ENCODE measurements at regions of chr6 and their contacts with region 1.

Region 1: DNA sequence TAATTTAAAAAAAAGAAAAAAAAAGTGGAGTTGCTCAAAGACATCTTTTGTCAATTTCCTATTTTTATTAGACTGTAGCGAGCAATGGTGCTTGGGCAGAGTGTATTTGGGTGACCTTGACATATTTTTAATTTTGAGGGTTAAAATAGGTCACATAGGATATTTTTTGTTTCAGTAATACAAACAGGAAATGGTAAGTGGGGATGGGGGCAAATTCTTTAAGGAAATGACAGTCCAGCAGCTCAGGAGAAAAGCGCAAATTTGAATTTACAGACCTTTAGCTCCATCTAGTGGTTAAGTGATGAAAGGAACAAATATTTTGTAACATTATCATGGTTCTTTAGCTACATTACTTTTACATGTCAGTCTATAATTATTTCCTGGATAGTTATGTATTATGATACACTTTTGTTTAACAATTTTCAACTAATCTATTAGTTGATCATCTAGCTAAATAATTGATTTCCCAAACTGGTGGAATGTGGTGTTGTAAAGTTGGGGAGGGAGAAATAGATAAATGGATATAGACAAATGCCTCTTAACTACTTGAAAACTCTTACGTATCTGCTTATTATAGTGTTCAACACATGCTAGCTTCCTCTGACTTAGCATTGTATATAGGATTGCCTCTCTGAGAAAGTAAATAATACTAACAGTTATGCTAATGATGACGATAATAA is 10.0 kb downstream of the CITED2 start:
- DNase-seq: no peak
- H3K4me3 Mint-ChIP-seq: no peak overlapping the region
- H3K27ac Mint-ChIP-seq: peak overlapping the region; percentile 10
- H3K4me1 Mint-ChIP-seq: peaks cover 34% of the 10 kb centered on the region
- H3K27me3 Mint-ChIP-seq: no peaks in the 10 kb centered on the region

Region 2: GRCh38 chr6:138817822-138818308 is 546.6 kb before region 1 on chr6:
- CTCF ChIA-PET with region 1: interaction called, 19 read pairs
- DNase-seq: no peak
- H3K4me3 Mint-ChIP-seq: no peak overlapping the region
- H3K27ac Mint-ChIP-seq: no peak overlapping the region
- H3K4me1 Mint-ChIP-seq: peaks cover 25% of the 10 kb centered on the region
- H3K27me3 Mint-ChIP-seq: no peaks in the 10 kb centered on the region

Region 3: DNA sequence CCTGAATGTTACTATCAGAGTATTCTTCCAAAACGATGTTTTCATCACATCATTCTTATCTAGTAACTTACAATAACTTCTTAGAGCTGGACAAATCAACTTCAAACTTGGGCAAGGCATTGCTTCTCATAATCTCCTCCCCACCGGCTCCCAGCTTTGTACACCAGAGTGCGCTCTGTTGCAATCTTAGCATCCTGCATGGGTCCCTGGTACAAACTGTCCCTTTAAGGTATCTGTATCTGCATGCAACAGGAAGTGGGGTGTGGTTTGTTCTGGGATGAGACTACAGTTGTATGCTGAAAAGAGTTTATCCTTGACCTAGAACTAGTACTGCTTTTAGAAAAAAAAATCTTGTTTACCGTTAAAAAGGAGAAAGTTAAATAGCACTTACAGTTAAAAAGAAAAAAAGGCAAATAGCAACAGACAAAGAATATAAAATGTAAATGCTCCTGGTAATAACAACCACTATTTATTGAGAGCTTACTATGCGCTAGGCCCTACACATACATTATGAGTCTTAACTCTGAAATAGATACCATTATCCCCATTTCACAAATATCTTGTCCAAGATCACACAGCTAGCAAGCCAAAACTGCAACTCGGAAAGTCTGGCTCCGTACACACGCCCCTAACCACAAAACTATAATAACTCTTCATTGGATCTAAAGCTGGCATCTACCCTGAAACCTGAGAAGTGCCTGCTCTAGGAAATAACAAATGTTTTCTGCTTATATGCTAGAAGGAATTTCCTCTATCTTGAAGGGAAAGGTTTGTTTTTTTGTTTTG is 239.4 kb before region 1 on chr6:
- CTCF ChIA-PET with region 1: interaction called, 38 read pairs
- DNase-seq: peak; percentile 89
- H3K4me3 Mint-ChIP-seq: peak overlapping the region; percentile 61
- H3K27ac Mint-ChIP-seq: peak overlapping the region; percentile 97
- H3K4me1 Mint-ChIP-seq: peaks cover 49% of the 10 kb centered on the region
- H3K27me3 Mint-ChIP-seq: no peaks in the 10 kb centered on the region

Region 4: GRCh38 chr6:139134817-139135581 is 229.4 kb before region 1 on chr6 and contains the start of gene HECA:
- CTCF ChIA-PET with region 1: interaction called, 14 read pairs
- DNase-seq: peak; percentile 99
- H3K4me3 Mint-ChIP-seq: peak within 1 kb of the TSS; percentile 82
- H3K27ac Mint-ChIP-seq: peak within 1 kb of the TSS; percentile 99
- H3K4me1 Mint-ChIP-seq: peaks cover 69% of the 10 kb centered on the region
- H3K27me3 Mint-ChIP-seq: no peaks in the 10 kb centered on the region

Region 5: DNA sequence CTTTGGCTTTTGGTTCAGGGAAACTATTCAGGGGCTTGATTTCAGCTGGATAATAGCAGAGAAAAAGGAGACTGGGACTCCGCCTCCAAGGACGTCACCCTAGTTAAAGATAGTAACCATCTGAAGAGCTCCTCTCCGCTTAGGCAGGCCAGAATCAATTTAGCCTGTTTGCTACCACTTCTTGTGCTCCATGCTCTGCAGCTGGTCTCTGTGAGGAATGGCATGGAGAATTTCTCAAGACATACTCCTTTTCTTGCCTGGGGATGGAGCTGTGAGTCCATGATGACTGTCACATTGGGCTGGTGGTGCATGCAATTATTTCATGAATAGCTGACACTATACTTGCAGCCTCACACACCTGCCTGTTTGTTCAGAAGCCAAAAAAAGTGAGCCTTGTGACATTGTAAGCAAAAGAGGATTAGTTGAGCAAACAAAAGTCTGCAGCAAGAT is 134.0 kb before region 1 on chr6:
- CTCF ChIA-PET with region 1: interaction called, 28 read pairs
- DNase-seq: no peak
- H3K4me3 Mint-ChIP-seq: no peak overlapping the region
- H3K27ac Mint-ChIP-seq: no peak overlapping the region
- H3K4me1 Mint-ChIP-seq: no peaks in the 10 kb centered on the region
- H3K27me3 Mint-ChIP-seq: no peaks in the 10 kb centered on the region

Region 6: GRCh38 chr6:139291813-139292619 is 72.4 kb before region 1 on chr6 and contains the start of gene TXLNB:
- CTCF ChIA-PET with region 1: interaction called, 37 read pairs
- DNase-seq: peak; percentile 92
- H3K4me3 Mint-ChIP-seq: peak within 1 kb of the TSS; percentile 70
- H3K27ac Mint-ChIP-seq: peak within 1 kb of the TSS; percentile 97
- H3K4me1 Mint-ChIP-seq: peaks cover 54% of the 10 kb centered on the region
- H3K27me3 Mint-ChIP-seq: no peaks in the 10 kb centered on the region

Region 7: GRCh38 chr6:139375232-139376016 is 11.0 kb after region 1 on chr6:
- CTCF ChIA-PET with region 1: interaction called, 16 read pairs
- DNase-seq: peak; percentile 91
- H3K4me3 Mint-ChIP-seq: peak overlapping the region; percentile 97
- H3K27ac Mint-ChIP-seq: peak overlapping the region; percentile 100
- H3K4me1 Mint-ChIP-seq: peaks cover 31% of the 10 kb centered on the region
- H3K27me3 Mint-ChIP-seq: peaks cover 3% of the 10 kb centered on the region

Region 8: GRCh38 chr6:139515511-139515910 is 151.1 kb after region 1 on chr6:
- CTCF ChIA-PET with region 1: no interaction called
- DNase-seq: no peak
- H3K4me3 Mint-ChIP-seq: no peak overlapping the region
- H3K27ac Mint-ChIP-seq: no peak overlapping the region
- H3K4me1 Mint-ChIP-seq: no peaks in the 10 kb centered on the region
- H3K27me3 Mint-ChIP-seq: no peaks in the 10 kb centered on the region